ENCODE measurements at regions of chr7 and their contacts with region 1.

Region 1: DNA sequence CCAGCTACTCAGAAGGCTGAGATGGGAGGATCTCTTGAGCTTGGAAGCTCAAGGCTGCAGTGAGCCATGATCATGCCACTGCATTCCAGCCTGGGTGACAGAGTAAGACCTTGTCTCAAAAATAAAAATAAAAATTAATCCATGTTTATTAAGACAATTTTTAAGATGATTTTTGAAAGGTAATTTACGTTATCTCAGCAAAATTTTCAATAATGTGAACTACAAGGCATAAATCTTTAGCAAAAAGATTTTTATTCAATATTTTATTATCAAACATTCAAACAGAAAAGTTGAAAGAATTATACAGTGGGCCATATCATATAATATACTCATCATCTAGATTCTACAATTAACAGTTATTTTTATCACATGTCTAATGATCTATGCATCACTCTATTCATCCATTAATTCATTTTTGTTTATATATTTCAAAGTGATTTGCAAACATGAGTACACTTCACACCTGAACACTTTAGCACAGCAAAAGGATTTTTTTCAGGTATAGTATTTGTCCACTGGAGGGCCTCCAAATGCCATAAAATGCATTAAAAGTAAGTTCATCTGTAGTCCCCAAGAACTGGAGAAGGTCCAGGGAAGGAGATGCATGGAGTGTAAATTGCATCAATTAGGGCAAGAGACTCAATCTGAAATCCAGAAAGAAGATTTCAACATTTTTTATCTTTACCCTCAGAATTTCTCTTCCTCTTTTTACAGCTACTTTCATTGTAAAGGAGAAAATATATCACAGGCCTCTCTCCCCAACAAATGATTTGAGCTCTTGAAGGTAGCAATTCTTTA is 38.6 kb upstream of the RSBN1L start:
- DNase-seq: no peak
- H3K4me3 Mint-ChIP-seq: no peak overlapping the region
- H3K27ac Mint-ChIP-seq: no peak overlapping the region
- H3K4me1 Mint-ChIP-seq: no peaks in the 10 kb centered on the region
- H3K27me3 Mint-ChIP-seq: no peaks in the 10 kb centered on the region

Region 2: DNA sequence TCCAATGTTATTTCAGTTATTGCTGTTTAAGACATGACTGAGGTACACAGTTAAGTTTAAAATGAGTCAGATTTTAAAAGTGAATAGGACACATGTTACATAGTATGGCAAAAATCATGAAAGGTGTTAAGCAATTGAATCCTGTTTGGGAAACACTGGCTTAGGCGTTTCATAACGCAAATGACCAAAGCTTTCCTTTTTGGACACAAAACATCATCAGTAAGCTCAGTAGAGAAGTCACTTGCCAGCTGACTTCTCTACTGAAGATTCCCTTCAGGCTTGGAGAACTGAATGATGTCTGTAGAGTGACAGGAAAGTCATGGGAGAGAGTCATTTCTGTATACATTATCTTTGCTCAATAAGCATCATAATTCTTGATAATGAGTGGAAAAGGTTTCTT is 25.8 kb before region 1 on chr7:
- intact Hi-C with region 1: no loop called
- DNase-seq: no peak
- H3K4me3 Mint-ChIP-seq: no peak overlapping the region
- H3K27ac Mint-ChIP-seq: no peak overlapping the region
- H3K4me1 Mint-ChIP-seq: peaks cover 2% of the 10 kb centered on the region
- H3K27me3 Mint-ChIP-seq: no peaks in the 10 kb centered on the region

Region 3: DNA sequence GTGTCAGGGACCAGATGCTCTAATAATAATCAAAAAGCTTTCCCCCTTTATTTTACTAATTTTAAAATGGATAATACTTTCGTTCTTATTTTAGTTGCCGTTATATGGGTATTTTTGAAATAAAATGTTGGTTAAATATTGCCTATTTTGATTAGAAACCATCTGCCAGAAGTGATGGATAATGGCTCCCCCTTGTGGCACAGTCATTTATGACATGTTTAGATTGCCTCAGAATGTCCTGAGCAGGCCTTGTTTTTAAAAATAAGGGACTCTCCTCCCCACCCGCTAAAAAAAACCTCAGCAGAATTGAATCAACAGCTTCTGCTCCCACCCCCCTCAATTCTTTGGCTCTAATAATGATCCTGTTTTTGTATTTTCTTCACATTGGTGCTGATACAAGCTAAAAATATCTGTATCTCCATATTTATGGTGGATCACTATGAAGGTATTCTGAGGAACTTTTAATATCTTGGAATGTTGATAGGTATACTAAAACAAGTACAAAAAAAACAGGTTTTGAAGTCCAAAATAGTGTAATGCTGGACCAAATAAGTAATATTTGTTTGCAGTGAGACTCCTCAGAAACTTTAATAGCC is 101.8 kb after region 1 on chr7:
- intact Hi-C with region 1: loop called (anchors 1 kb)
- DNase-seq: peak; percentile 46
- H3K4me3 Mint-ChIP-seq: no peak overlapping the region
- H3K27ac Mint-ChIP-seq: no peak overlapping the region
- H3K4me1 Mint-ChIP-seq: peaks cover 26% of the 10 kb centered on the region
- H3K27me3 Mint-ChIP-seq: no peaks in the 10 kb centered on the region

Region 4: DNA sequence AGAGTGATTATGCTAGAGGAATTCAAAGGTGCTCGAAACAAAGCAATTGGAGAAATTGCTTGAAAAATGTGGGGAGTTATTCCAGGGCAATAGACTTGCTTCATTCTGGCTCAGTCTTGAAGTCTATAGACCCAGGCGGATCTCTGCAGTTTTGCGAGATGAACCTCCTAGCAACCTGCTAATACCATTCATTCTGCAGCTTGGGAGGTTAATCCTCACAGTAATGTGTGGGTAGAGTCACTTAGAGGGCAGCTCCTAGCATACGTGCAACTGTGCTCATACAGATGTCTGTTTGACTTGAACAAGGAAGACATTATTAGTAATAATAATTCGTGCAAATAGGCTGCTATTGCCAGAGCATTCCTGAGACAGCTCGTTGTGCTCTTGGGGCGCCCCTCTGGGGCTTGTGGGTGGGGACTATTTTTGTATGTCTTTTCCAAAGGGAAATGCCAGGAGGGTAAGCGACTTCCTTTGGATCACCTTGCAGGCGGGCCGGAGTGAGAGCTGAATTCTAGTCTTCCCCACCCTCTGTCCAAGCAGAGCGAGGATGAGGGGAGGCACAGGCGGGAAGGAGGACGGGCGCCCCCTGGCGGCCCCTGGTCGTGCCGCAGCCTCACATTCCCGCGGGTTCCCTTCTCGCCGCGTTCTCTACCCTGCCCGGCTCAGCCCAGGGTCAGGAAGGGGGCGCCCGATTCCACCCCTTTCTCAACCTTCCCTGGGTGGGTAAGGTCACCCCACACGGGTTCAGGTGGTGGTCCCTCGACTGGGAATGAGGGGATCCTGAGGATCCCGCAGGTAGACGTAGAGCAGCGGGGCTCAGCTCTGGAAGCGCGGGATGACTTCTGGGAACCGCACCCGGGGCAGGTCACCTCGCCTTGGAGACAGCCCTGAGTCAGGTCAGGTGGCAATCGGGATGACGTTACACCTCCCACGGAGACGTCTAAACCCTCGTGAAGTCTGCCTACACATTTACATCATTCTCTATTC is 382.5 kb after region 1 on chr7:
- intact Hi-C with region 1: loop called (anchors 10 kb)
- DNase-seq: peak; percentile 29
- H3K4me3 Mint-ChIP-seq: no peak overlapping the region
- H3K27ac Mint-ChIP-seq: no peak overlapping the region
- H3K4me1 Mint-ChIP-seq: peaks cover 2% of the 10 kb centered on the region
- H3K27me3 Mint-ChIP-seq: peaks cover 14% of the 10 kb centered on the region

Measured in activated T-helper 2 cell treated with anti-CD3 and anti-CD28 coated beads, Interferon-gamma antibody, Interleukin-2, Interleukin-4, amounts not matched to agents 10 μg/mL and 5 μg/mL and 100 μg/mL, durations not matched to agents 14 hours and 24 hours and 36 hours (primary cell).